ENCODE measurements at regions of chr22 and their contacts with region 1.

Region 1: DNA sequence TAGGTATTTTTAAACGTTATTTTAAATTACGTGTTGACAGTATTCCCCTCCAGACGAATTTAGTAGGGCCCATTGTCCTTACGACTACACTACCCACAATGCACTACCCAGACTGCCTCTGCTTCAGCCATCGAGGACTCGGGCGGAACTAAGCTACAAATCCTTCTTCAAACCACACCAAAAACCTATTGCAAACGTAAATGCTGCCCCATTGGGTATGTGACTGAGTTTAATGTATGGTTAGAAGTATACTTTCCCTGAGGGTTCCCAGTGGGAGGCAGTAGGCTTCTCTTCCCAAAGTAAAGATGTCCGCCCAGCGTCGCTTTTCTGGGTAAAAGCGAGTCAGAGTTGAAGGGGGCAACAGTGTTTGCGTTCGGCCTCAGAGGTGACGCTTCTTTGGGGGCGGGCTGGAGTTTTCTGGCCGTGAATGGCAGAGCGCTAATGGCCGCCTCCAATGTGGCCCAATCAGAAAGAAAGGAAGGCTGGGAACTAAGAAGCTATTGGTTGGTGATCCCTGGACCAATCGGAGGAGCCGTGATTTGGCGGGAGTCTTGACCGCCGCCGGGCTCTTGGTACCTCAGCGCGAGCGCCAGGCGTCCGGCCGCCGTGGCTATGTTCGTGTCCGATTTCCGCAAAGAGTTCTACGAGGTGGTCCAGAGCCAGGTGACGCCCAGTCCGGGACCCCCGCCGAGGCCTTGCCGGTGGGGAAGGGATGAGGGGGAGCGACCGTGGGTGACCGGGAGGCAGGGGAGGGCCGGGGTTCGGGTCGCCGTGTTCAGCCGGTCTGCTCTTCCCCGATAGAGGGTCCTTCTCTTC is at the start of gene CDC45:
- DNase-seq: peak; percentile 100
- ATAC-seq: peak; percentile 93
- H3K4me3 ChIP-seq: peak within 1 kb of the TSS; percentile 70
- H3K27ac ChIP-seq: peak within 1 kb of the TSS; percentile 97
- H3K4me1 ChIP-seq: peaks cover 7 to 16% of the 10 kb centered on the region in 2 experiments
- H3K27me3 ChIP-seq: no peaks in the 10 kb centered on the region
- CTCF ChIP-seq: 0 out of 6 replicates have a peak, but pooled peaks of 2 of the 3 experiments have one; percentile 9 to 11
- EP300 ChIP-seq: peak; percentile 35
- POLR2A ChIP-seq: no peak
- RAD21 ChIP-seq: peak in 1 of 2 experiments; percentile 42; a peak in 2 of 4 replicates
- polyA plus RNA-seq, gene CDC45: 276 to 465 TPM

Region 2: GRCh38 chr22:19143967-19144400 is 335.6 kb before region 1 on chr22:
- CTCF ChIA-PET with region 1: no interaction called
- POLR2A ChIA-PET with region 1: interaction called, 4 read pairs
- in situ Hi-C with region 1: no loop called
- intact Hi-C with region 1: loop called (anchors 1 kb)
- DNase-seq: peak; percentile 79 to 82 (median 80)
- ATAC-seq: peak; percentile 48
- H3K4me3 ChIP-seq: peak overlapping the region; percentile 59
- H3K27ac ChIP-seq: peak overlapping the region; percentile 50
- H3K4me1 ChIP-seq: peaks cover 4 to 19% of the 10 kb centered on the region in 2 experiments; a peak in 4 of 5 replicates
- H3K27me3 ChIP-seq: peaks cover 14 to 26% of the 10 kb centered on the region in 2 experiments; a peak in 4 of 5 replicates
- CTCF ChIP-seq: no peak
- EP300 ChIP-seq: no peak
- POLR2A ChIP-seq: no peak
- RAD21 ChIP-seq: no peak

Region 3: GRCh38 chr22:19214078-19214473 is 265.5 kb before region 1 on chr22:
- CTCF ChIA-PET with region 1: interaction called, 4 read pairs
- POLR2A ChIA-PET with region 1: no interaction called
- in situ Hi-C with region 1: no loop called
- intact Hi-C with region 1: loop called (anchors 1 kb)
- DNase-seq: peak in 1 of 4 experiments; percentile 38
- ATAC-seq: no peak
- H3K4me3 ChIP-seq: no peak overlapping the region
- H3K27ac ChIP-seq: no peak overlapping the region
- H3K4me1 ChIP-seq: peaks cover 9 to 13% of the 10 kb centered on the region in 2 experiments
- H3K27me3 ChIP-seq: peaks cover 30 to 37% of the 10 kb centered on the region in 2 experiments
- CTCF ChIP-seq: no peak
- EP300 ChIP-seq: no peak
- POLR2A ChIP-seq: no peak
- RAD21 ChIP-seq: 0 out of 4 replicates have a peak, but pooled peaks of 1 of the 2 experiments have one; percentile 9

Region 4: GRCh38 chr22:19432133-19432851 is 47.3 kb before region 1 on chr22 and contains the start of gene MRPL40:
- CTCF ChIA-PET with region 1: interaction called, 5 read pairs
- POLR2A ChIA-PET with region 1: interaction called, 16 read pairs
- in situ Hi-C with region 1: no loop called
- intact Hi-C with region 1: loop called (anchors 1 kb)
- DNase-seq: peak; percentile 100
- ATAC-seq: peak; percentile 92
- H3K4me3 ChIP-seq: peak within 1 kb of the TSS; percentile 68
- H3K27ac ChIP-seq: peak within 1 kb of the TSS; percentile 87
- H3K4me1 ChIP-seq: peaks cover 17 to 39% of the 10 kb centered on the region in 2 experiments
- H3K27me3 ChIP-seq: no peaks in the 10 kb centered on the region
- CTCF ChIP-seq: peak in 2 of 3 experiments; percentile 16 to 23; a peak in 1 of 6 replicates
- EP300 ChIP-seq: peak; percentile 90
- POLR2A ChIP-seq: no peak
- RAD21 ChIP-seq: peak; percentile 31 to 59; a peak in 3 of 4 replicates
- polyA plus RNA-seq, gene MRPL40: 601 to 652 TPM

Region 5: GRCh38 chr22:19447388-19448075 is 32.0 kb before region 1 on chr22 and contains the start of gene C22orf39:
- CTCF ChIA-PET with region 1: no interaction called
- POLR2A ChIA-PET with region 1: interaction called, 24 read pairs
- in situ Hi-C with region 1: no loop called
- intact Hi-C with region 1: loop called (anchors 1 kb)
- DNase-seq: peak; percentile 99 to 100 (median 100)
- ATAC-seq: peak; percentile 95
- H3K4me3 ChIP-seq: peak within 1 kb of the TSS; percentile 73
- H3K27ac ChIP-seq: peak within 1 kb of the TSS; percentile 86
- H3K4me1 ChIP-seq: peaks cover 27 to 38% of the 10 kb centered on the region in 2 experiments
- H3K27me3 ChIP-seq: no peaks in the 10 kb centered on the region
- CTCF ChIP-seq: 0 out of 6 replicates have a peak, but pooled peaks of 1 of the 3 experiments have one; percentile 4
- EP300 ChIP-seq: 0 out of 2 replicates have a peak, but pooled peaks have one; percentile 14
- POLR2A ChIP-seq: peak; percentile 97
- RAD21 ChIP-seq: peak; percentile 31 to 47
- polyA plus RNA-seq, gene C22orf39: 20.4 to 25.9 TPM

Region 6: DNA sequence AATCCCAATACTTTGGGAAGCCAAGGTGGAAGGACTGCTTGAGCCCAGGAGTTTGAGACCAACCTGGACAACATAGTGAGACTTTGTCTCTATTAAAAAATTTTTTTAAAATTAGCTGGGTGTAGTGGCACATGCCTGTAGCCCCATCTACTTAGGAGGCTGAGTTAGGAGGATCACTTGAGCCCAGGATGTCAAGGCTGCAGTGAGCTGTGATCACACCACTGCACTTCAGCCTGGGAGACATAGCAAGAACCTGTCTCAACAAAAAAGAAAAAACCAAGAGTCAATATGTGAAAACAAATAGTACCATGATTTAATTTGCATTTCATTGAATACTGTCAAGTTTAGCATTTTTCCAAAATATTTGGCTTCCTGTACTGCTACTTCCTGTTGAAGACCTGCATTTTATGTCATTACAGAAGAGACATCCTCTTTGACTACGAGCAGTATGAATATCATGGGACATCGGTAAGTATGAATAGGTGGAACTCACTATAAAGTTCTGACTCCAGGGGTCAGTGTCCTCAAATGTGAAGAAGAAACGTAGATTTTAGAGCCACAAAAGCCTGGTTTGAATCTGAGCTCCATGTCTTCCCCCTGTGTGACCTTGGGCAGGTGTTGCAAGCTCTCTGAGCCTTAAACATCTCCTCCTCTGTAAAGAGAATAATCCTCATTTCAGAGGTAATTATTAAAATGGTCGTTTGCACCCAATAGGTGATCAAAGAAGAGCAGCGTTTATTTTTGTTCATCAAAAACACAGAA is 16.2 kb after region 1 on chr22:
- CTCF ChIA-PET with region 1: no interaction called
- POLR2A ChIA-PET with region 1: interaction called, 95 read pairs
- in situ Hi-C with region 1: no loop called
- intact Hi-C with region 1: no loop called
- DNase-seq: peak in 1 of 4 experiments; percentile 69
- ATAC-seq: no peak
- H3K4me3 ChIP-seq: no peak overlapping the region
- H3K27ac ChIP-seq: no peak overlapping the region
- H3K4me1 ChIP-seq: no peaks in the 10 kb centered on the region; a peak in 2 of 5 replicates
- H3K27me3 ChIP-seq: no peaks in the 10 kb centered on the region
- CTCF ChIP-seq: peak in 2 of 3 experiments; percentile 25 to 36; a peak in 4 of 6 replicates
- EP300 ChIP-seq: no peak
- POLR2A ChIP-seq: no peak
- RAD21 ChIP-seq: peak; percentile 48 to 51; a peak in 3 of 4 replicates

Region 7: GRCh38 chr22:19686946-19687345 is 207.4 kb after region 1 on chr22:
- CTCF ChIA-PET with region 1: no interaction called
- POLR2A ChIA-PET with region 1: no interaction called
- in situ Hi-C with region 1: no loop called
- intact Hi-C with region 1: no loop called
- DNase-seq: peak in 2 of 4 experiments; percentile 40 to 45
- ATAC-seq: 0 out of 3 replicates have a peak, but pooled peaks have one; percentile 2
- H3K4me3 ChIP-seq: no peak overlapping the region
- H3K27ac ChIP-seq: no peak overlapping the region
- H3K4me1 ChIP-seq: peaks cover 19 to 33% of the 10 kb centered on the region in 2 experiments; a peak in 4 of 5 replicates
- H3K27me3 ChIP-seq: peaks cover 24 to 38% of the 10 kb centered on the region in 2 experiments
- CTCF ChIP-seq: no peak
- EP300 ChIP-seq: no peak
- POLR2A ChIP-seq: no peak
- RAD21 ChIP-seq: no peak

Region 8: DNA sequence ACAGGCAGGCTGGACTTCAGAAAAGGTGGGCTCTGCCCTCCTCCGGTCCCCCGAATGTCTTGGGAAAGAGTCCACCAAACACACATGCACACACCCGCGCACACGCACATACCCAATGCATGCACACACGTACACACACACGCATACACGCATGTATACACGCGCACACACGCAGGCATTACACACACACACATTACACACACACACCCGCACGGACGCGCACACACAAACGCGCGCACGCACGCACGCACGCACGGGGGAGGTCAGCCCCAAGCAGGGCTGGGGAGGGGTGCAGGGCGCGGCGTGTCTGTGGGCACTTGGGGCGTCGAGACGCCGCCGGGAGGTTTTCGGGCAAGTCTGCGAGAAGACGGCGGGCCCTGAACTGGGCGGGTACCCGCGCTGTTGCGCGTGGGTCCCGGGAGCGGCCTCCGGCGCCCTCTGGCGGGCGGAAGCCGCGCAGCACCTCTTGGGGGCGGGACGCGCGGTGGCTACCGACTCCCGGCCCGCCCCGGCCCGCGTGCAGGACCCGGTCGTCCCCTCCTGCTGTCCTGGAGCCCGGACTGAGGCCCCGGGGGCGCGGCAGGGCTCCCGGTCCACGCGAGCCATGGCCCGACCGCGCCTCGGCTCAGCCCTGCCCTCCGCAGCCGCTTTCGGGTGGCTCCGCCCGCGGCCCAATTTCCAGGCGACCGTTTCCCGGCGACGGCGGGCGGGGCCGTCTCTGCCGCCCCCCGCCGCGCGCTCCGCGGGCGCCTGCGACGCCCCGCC is 238.3 kb after region 1 on chr22:
- CTCF ChIA-PET with region 1: no interaction called
- POLR2A ChIA-PET with region 1: no interaction called
- in situ Hi-C with region 1: no loop called
- intact Hi-C with region 1: loop called (anchors 5 kb)
- DNase-seq: peak; percentile 98 to 99 (median 98)
- ATAC-seq: peak; percentile 69
- H3K4me3 ChIP-seq: peak overlapping the region; percentile 51
- H3K27ac ChIP-seq: peak overlapping the region; percentile 92
- H3K4me1 ChIP-seq: peaks cover 62 to 97% of the 10 kb centered on the region in 2 experiments
- H3K27me3 ChIP-seq: peaks cover 0 to 10% of the 10 kb centered on the region in 2 experiments; a peak in 2 of 5 replicates
- CTCF ChIP-seq: peak; percentile 98 to 100 (median 98)
- EP300 ChIP-seq: peak; percentile 47; the same call in 1 of the 2 replicates
- POLR2A ChIP-seq: peak; percentile 2; the same call in 1 of the 2 replicates
- RAD21 ChIP-seq: peak in 1 of 2 experiments; percentile 100; a peak in 2 of 4 replicates

Measured in K562 (cell line).